ENCODE measurements at regions of chr22 and their contacts with region 1.

Region 1: DNA sequence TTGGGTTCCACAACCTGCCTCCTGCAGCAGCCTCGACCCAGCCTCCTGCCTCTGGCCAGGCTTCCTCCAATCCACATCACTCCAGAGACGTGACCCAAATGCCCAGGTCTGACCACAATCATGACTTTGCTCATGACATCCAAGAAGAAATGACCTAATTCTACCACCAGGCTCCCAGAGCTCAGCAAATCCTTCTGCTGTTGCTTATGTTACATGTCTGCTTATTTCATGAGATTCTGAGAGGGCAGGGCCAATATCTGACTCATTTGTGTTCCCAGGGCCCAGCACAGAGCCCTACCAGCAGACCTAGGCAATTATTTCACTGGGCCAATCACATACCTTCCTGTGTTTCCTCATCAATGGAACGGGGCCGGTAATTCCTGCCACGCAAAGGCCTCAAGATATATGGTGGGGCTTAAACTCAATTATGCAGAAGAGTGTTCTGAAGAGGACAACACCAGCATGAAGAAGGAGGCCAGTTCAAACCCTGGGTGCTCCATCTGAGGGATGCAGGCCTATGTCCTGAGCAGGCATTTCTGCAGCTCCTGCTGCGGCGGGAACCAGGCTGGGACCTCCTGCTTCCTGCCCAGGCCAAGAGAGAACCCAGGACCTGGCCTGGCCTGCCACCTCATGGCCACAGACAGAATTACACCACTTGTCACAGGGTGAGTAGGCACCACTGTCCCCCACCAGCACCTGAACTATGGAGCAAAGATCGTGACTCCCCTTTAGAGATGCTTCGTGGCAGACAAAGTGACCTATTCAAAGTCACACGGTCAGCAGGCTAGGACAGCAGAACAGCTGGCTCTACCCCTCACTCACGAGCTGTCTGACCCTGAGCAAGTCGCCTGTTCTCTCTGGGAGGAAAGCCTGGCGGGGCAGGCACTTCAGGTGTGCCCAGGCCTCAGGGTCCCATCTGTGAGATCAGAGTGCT is 5.9 kb downstream of the CENPM start:
- DNase-seq: peak; percentile 80 to 92 (median 86)
- ATAC-seq: peak; percentile 61
- H3K4me3 ChIP-seq: peak overlapping the region; percentile 18
- H3K4me3 Mint-ChIP-seq: peak overlapping the region; percentile 78
- H3K27ac ChIP-seq: peak overlapping the region; percentile 96 to 99
- H3K27ac Mint-ChIP-seq: peak overlapping the region; percentile 97
- H3K4me1 ChIP-seq: peaks cover 43% of the 10 kb centered on the region
- H3K4me1 Mint-ChIP-seq: peaks cover 39% of the 10 kb centered on the region
- H3K27me3 ChIP-seq: no peaks in the 10 kb centered on the region
- H3K27me3 Mint-ChIP-seq: no peaks in the 10 kb centered on the region
- CTCF ChIP-seq: peak; percentile 98

Region 2: DNA sequence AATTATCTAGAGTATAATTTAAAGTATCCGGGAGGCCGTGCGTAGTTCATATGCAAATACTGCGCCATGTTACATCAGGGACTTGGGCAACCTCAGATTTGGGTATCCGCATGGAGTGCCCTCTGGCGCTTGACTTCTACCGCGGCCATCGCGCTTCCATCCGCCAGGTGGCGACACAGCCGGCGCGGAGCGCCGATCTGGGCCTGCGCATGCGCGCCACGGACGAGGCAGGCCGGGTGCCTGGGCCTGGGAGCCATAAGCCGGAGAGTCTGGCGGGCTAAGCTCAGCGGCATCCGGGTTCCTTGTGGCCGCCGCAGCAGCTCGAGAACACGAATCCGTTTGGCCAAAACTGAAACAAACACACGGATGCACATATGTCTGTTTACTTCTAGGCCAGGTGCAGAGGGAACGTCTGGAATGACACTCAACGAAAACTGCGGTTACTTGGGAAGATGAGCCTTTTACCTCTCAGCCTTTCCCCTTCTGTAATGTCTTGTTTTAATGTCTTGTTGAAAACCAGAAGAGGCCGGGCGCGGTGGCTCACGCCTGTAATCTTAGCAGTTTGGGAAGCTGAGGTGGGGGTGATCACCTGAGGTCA is 274.3 kb before region 1 on chr22:
- CTCF ChIA-PET with region 1: interaction called, 5 read pairs
- POLR2A ChIA-PET with region 1: interaction called, 16 read pairs
- intact Hi-C with region 1: loop called (anchors 1 kb)
- DNase-seq: peak; percentile 84 to 97 (median 93)
- ATAC-seq: peak; percentile 92
- H3K4me3 ChIP-seq: peak overlapping the region; percentile 58
- H3K4me3 Mint-ChIP-seq: peak overlapping the region; percentile 90
- H3K27ac ChIP-seq: peak overlapping the region; percentile 77 to 85
- H3K27ac Mint-ChIP-seq: peak overlapping the region; percentile 94
- H3K4me1 ChIP-seq: peaks cover 17% of the 10 kb centered on the region
- H3K4me1 Mint-ChIP-seq: peaks cover 13% of the 10 kb centered on the region
- H3K27me3 ChIP-seq: no peaks in the 10 kb centered on the region
- H3K27me3 Mint-ChIP-seq: no peaks in the 10 kb centered on the region
- CTCF ChIP-seq: peak; percentile 97

Region 3: DNA sequence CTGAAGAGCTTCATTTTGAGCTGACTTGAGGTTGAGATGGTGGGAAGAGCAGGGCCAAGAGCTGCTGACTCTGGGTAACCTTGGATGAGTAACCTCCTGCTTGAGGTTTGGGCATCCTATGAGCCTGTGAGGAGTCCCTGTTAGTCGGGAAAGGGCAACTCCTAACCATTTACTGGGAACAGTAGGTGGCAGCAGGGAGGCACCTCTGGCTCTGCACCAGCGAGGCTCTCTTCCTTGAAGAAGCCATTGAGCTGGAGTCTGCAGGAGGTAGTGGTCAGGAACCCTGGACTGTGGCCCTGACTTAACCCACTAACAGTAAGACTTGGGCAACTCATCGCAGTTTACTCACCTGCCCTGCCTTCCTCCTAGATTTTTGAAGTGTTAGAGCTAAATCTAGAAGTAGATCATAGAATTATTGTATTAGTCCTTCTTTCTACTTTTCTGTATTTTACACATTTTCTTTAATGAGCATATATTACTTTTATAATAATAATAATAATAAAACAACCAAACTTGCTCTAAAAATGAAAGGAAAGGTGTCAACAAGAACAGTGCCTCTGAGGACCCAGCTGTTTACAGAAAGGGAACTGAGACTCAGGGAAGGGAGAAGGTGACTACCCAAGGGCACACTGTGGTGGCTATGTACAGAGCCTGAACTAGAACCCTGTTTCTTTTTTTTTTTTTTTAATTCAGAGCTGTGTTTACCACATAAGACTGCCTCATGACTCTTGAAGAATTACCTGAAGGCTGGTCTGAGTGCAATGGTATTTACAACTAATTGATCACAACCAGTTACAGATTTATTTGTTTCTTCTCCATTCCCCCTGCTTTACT is 194.3 kb before region 1 on chr22:
- CTCF ChIA-PET with region 1: interaction called, 21 read pairs
- POLR2A ChIA-PET with region 1: interaction called, 5 read pairs
- intact Hi-C with region 1: loop called (anchors 1 to 2 kb)
- DNase-seq: peak; percentile 29 to 81 (median 44)
- ATAC-seq: peak; percentile 90
- H3K4me3 ChIP-seq: no peak overlapping the region
- H3K4me3 Mint-ChIP-seq: no peak overlapping the region
- H3K27ac ChIP-seq: no peak overlapping the region
- H3K27ac Mint-ChIP-seq: no peak overlapping the region
- H3K4me1 ChIP-seq: peaks cover 5% of the 10 kb centered on the region
- H3K4me1 Mint-ChIP-seq: no peaks in the 10 kb centered on the region
- H3K27me3 ChIP-seq: no peaks in the 10 kb centered on the region
- H3K27me3 Mint-ChIP-seq: peaks cover 10% of the 10 kb centered on the region
- CTCF ChIP-seq: peak; percentile 81

Region 4: GRCh38 chr22:41822317-41823060 is 118.6 kb before region 1 on chr22:
- CTCF ChIA-PET with region 1: interaction called, 16 read pairs
- POLR2A ChIA-PET with region 1: interaction called, 13 read pairs
- intact Hi-C with region 1: loop called (anchors 1 kb)
- DNase-seq: peak in 6 of 14 experiments; percentile 6 to 87 (median 66)
- ATAC-seq: peak; percentile 92
- H3K4me3 ChIP-seq: no peak overlapping the region
- H3K4me3 Mint-ChIP-seq: no peak overlapping the region
- H3K27ac ChIP-seq: no peak overlapping the region
- H3K27ac Mint-ChIP-seq: peak overlapping the region; percentile 69
- H3K4me1 ChIP-seq: peaks cover 5% of the 10 kb centered on the region
- H3K4me1 Mint-ChIP-seq: peaks cover 18% of the 10 kb centered on the region
- H3K27me3 ChIP-seq: no peaks in the 10 kb centered on the region
- H3K27me3 Mint-ChIP-seq: no peaks in the 10 kb centered on the region
- CTCF ChIP-seq: peak; percentile 60

Region 5: DNA sequence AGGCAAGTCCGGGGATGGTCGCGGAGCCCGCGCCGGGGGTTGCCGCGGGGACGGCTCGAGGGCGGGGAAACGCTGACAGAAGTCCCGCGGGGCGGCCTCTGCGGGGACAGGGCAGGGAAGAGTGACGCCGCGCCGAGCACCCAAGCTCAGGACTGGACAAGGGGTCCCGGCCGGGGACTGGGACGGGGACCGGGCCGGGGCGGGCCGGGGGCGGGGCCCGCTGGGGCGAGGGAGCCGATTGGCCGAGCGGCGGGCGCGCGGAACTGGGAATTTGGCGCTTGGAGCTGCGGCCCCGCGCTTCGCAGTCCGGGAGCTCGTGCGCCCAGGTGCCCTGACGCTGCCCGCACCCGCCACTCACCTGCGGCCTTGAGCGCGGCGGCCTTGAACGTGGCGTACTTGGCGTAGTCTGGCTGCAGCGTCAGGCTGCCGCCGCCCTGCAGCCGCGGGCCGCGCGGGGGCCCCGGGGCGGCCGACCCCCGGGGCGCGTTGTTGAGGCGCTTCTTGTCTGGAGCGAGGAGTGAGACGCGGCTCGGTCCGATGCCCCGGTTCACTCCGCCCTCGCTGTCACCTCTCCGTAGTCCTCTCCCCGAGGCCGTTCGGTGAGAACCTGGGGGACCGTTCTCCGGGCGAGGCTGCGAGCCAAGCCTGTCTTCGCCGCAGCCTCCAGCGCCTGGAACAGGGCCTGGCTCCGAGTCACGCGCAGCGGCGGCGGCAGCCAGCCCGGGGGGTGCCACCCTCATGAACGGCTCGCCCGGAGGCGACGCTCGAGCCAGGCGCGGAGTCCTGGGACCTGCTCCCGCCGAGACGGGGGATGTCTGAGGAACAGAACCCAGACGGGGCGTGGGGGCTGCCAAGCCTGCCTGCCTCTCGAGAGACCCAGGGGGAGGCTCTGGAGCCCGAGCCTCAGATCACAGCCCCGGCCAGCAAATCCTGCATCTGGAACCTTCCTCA is 30.8 kb before region 1 on chr22:
- CTCF ChIA-PET with region 1: interaction called, 6 read pairs
- POLR2A ChIA-PET with region 1: interaction called, 13 read pairs
- intact Hi-C with region 1: no loop called
- DNase-seq: peak in 8 of 14 experiments; percentile 23 to 68 (median 46)
- ATAC-seq: peak; percentile 46
- H3K4me3 ChIP-seq: peak overlapping the region; percentile 34
- H3K4me3 Mint-ChIP-seq: peak overlapping the region; percentile 66
- H3K27ac ChIP-seq: no peak overlapping the region
- H3K27ac Mint-ChIP-seq: no peak overlapping the region
- H3K4me1 ChIP-seq: peaks cover 42% of the 10 kb centered on the region
- H3K4me1 Mint-ChIP-seq: peaks cover 23% of the 10 kb centered on the region
- H3K27me3 ChIP-seq: peaks cover 36 to 41% of the 10 kb centered on the region in 2 experiments
- H3K27me3 Mint-ChIP-seq: peaks cover 44% of the 10 kb centered on the region
- CTCF ChIP-seq: no peak

Region 6: GRCh38 chr22:42444077-42444904 is 503.2 kb after region 1 on chr22:
- CTCF ChIA-PET with region 1: no interaction called
- POLR2A ChIA-PET with region 1: interaction called, 15 read pairs
- intact Hi-C with region 1: no loop called
- DNase-seq: peak; percentile 63 to 92 (median 80)
- ATAC-seq: peak; percentile 95
- H3K4me3 ChIP-seq: peak overlapping the region; percentile 62
- H3K4me3 Mint-ChIP-seq: peak overlapping the region; percentile 88
- H3K27ac ChIP-seq: peak overlapping the region; percentile 73 to 78
- H3K27ac Mint-ChIP-seq: peak overlapping the region; percentile 96
- H3K4me1 ChIP-seq: peaks cover 24% of the 10 kb centered on the region
- H3K4me1 Mint-ChIP-seq: peaks cover 28% of the 10 kb centered on the region
- H3K27me3 ChIP-seq: no peaks in the 10 kb centered on the region
- H3K27me3 Mint-ChIP-seq: no peaks in the 10 kb centered on the region
- CTCF ChIP-seq: peak; percentile 63

Measured in CD4-positive, alpha-beta T cell (primary cell).